MCF 10A (cell line): ENCODE measurements at regions of chr15 and their contacts with region 1.

Region 1: GRCh38 chr15:62119227-62119864 is 45.7 kb downstream of the C2CD4B start:
- DNase-seq: peak; percentile 94
- H3K4me3 Mint-ChIP-seq: peak overlapping the region; percentile 61
- H3K27ac Mint-ChIP-seq: peak overlapping the region; percentile 86
- H3K4me1 Mint-ChIP-seq: peaks cover 29% of the 10 kb centered on the region
- H3K27me3 Mint-ChIP-seq: no peaks in the 10 kb centered on the region
- CTCF ChIP-seq: no peak

Region 2: DNA sequence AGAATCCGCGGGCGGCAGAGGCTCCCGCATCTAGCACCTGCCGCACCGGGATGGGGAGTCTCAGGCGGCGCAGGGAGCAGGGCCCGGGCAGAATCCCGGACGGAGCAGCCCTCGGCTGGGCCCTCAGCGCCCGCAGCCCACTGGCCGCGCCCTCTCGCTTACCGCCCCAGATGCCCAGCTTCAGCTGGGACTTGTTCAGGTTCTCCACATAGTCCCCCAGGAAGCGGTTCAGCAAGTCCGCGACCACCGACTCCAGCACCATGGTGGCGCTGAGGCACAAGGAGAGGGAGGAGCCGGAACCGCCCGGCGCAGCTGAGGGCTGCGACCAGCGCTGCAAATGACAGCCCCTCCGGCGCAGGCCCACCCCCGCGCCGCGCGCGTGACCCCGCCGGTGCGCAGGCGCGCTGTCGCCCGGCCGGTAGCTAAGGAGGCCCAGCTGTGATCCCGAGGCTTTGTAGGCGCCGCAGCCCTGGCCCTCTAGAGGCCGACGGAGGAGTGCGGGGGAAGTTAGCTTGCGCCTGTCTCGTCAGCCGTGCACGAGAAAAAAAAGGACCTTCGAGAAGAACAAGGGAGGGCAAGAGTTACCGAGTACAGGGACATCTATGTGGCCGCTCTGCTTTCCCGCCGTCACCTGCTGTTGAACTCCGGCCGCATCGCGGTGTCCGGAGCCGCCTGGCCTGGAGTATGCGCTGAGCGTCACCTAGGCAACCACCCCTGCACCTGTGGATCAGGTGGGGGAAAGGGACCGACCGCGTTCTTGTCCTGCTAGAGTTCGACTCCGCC is 59.0 kb before region 1 on chr15 and contains the start of gene VPS13C:
- CTCF ChIA-PET with region 1: interaction called, 5 read pairs
- POLR2A ChIA-PET with region 1: interaction called, 10 read pairs
- intact Hi-C with region 1: no loop called
- DNase-seq: peak; percentile 90
- H3K4me3 Mint-ChIP-seq: peak within 1 kb of the TSS; percentile 88
- H3K27ac Mint-ChIP-seq: peak within 1 kb of the TSS; percentile 86
- H3K4me1 Mint-ChIP-seq: peaks cover 28% of the 10 kb centered on the region
- H3K27me3 Mint-ChIP-seq: no peaks in the 10 kb centered on the region
- CTCF ChIP-seq: peak; percentile 69
- total RNA-seq, gene VPS13C: 47.4 and 58.7 TPM in 2 replicates

Region 3: GRCh38 chr15:62107566-62108110 is 11.7 kb before region 1 on chr15:
- CTCF ChIA-PET with region 1: interaction called, 5 read pairs
- POLR2A ChIA-PET with region 1: interaction called, 10 read pairs
- intact Hi-C with region 1: no loop called
- DNase-seq: no peak
- H3K4me3 Mint-ChIP-seq: no peak overlapping the region
- H3K27ac Mint-ChIP-seq: no peak overlapping the region
- H3K4me1 Mint-ChIP-seq: peaks cover 39% of the 10 kb centered on the region
- H3K27me3 Mint-ChIP-seq: no peaks in the 10 kb centered on the region
- CTCF ChIP-seq: no peak